Activated T-helper 2 cell treated with anti-CD3 and anti-CD28 coated beads, Interferon-gamma antibody, Interleukin-2, Interleukin-4, amounts not matched to agents 10 μg/mL and 5 μg/mL and 100 μg/mL, durations not matched to agents 14 hours and 24 hours and 36 hours (primary cell): ENCODE measurements at regions of chr5 and their contacts with region 1.

Region 1: GRCh38 chr5:132639706-132640130 is 18.3 kb upstream of the IL13 start:
- DNase-seq: no peak
- H3K4me3 Mint-ChIP-seq: peak overlapping the region; percentile 39
- H3K27ac Mint-ChIP-seq: peak overlapping the region; percentile 82
- H3K4me1 Mint-ChIP-seq: peaks cover 83% of the 10 kb centered on the region
- H3K27me3 Mint-ChIP-seq: no peaks in the 10 kb centered on the region

Region 2: DNA sequence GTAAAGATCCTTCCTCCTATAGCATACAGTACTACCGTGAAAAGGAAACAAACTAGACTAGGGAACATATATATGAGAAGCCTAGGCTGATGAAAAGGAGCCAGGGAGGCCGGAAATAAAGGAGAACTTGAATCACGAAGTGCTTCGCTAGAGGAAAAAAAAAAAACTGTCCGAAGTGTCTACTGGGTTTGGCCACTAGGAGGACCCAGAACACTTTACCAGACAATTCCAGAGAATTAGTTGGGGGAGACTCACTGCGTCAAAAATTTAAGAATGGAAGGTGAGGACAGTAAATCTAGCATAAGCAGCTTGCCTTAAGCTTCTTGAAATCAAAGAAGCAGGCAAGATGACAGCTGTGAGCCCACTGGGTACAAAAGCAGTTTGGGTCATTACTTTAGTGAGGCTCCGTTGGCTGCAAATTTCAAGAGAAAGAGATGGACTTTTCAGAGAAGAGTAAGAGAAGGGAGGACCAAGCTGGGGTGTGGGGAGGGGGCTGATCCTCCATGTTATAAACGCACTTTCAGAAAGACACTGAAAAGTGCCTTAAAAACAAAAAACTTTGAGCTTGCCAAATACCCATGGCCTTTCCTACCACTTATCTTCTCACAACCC is 459.5 kb before region 1 on chr5:
- intact Hi-C with region 1: loop called (anchors 5 kb)
- DNase-seq: no peak
- H3K4me3 Mint-ChIP-seq: peak overlapping the region; percentile 19
- H3K27ac Mint-ChIP-seq: peak overlapping the region; percentile 85
- H3K4me1 Mint-ChIP-seq: peaks cover 44% of the 10 kb centered on the region
- H3K27me3 Mint-ChIP-seq: no peaks in the 10 kb centered on the region

Region 3: DNA sequence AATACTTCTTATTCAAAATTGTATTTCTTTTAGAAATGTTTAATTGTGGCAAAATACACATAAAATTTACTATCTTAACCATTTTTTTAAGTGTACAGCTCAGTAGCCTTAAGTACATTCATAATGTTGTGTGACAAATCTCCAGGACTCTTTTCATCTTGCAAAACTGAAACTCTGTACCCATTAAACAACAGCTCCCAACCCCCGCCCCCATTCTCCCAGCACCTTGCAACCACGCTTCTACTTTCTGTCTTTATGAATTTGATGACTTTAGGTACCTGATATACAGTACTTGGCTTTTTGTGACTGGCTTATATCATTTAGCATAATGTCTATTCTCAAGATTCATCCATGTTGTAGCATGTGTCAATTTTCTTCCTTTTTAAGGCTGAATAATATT is 93.6 kb before region 1 on chr5:
- intact Hi-C with region 1: loop called (anchors 2 kb)
- DNase-seq: no peak
- H3K4me3 Mint-ChIP-seq: no peak overlapping the region
- H3K27ac Mint-ChIP-seq: peak overlapping the region; percentile 41
- H3K4me1 Mint-ChIP-seq: peaks cover 61% of the 10 kb centered on the region
- H3K27me3 Mint-ChIP-seq: peaks cover 6% of the 10 kb centered on the region

Region 4: GRCh38 chr5:132655821-132656773 is 16.4 kb after region 1 on chr5:
- intact Hi-C with region 1: loop called (anchors 1 kb)
- DNase-seq: no peak
- H3K4me3 Mint-ChIP-seq: peak overlapping the region; percentile 67
- H3K27ac Mint-ChIP-seq: peak overlapping the region; percentile 65
- H3K4me1 Mint-ChIP-seq: peaks cover 52% of the 10 kb centered on the region
- H3K27me3 Mint-ChIP-seq: peaks cover 12% of the 10 kb centered on the region

Region 5: GRCh38 chr5:132688536-132689339 is 49.0 kb after region 1 on chr5:
- intact Hi-C with region 1: loop called (anchors 1 kb)
- DNase-seq: no peak
- H3K4me3 Mint-ChIP-seq: no peak overlapping the region
- H3K27ac Mint-ChIP-seq: peak overlapping the region; percentile 68
- H3K4me1 Mint-ChIP-seq: peaks cover 45% of the 10 kb centered on the region
- H3K27me3 Mint-ChIP-seq: peaks cover 1% of the 10 kb centered on the region

Region 6: DNA sequence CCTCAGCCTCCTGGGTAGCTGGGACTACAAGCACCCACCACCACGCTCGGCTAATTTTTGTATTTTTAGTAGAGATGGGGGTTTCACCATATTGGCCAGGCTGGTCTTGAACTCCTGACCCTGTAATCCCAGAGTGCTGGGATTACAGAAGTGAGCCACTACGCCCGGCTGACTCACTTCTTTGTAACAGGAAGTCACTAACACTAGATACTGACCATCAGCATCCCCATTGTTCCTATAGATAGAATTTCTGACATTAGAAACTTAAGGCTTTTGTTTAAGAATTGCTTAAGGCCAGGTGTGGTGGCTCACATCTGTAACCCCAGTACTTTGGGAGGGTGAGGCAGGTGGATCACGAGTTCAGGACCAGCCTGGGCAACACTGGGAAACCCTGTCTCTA is 276.0 kb after region 1 on chr5:
- intact Hi-C with region 1: no loop called
- DNase-seq: no peak
- H3K4me3 Mint-ChIP-seq: no peak overlapping the region
- H3K27ac Mint-ChIP-seq: no peak overlapping the region
- H3K4me1 Mint-ChIP-seq: no peaks in the 10 kb centered on the region
- H3K27me3 Mint-ChIP-seq: no peaks in the 10 kb centered on the region